Vagina (tissue), 2 donors: ENCODE measurements at regions of chr9 and their contacts with region 1.

Region 1: GRCh38 chr9:87662808-87663528 is 63.0 kb upstream of the CTSL start:
- DNase-seq: peak in 1 of 2 donors; percentile 74
- H3K4me3 ChIP-seq: no peak overlapping the region
- H3K27ac ChIP-seq: no peak overlapping the region
- H3K4me1 ChIP-seq: no peaks in the 10 kb centered on the region
- H3K27me3 ChIP-seq: no peaks in the 10 kb centered on the region
- CTCF ChIP-seq: peak; percentile 38 to 61 (median 43)
- POLR2A ChIP-seq: no peak

Region 2: GRCh38 chr9:87336914-87337333 is 326.0 kb before region 1 on chr9:
- intact Hi-C with region 1: loop called (anchors 2 kb)
- DNase-seq: no peak
- H3K4me3 ChIP-seq: peak overlapping the region in 1 of 2 donors; percentile 17
- H3K27ac ChIP-seq: no peak overlapping the region
- H3K4me1 ChIP-seq: no peaks in the 10 kb centered on the region
- H3K27me3 ChIP-seq: no peaks in the 10 kb centered on the region
- CTCF ChIP-seq: peak; percentile 47 to 73 (median 67)
- POLR2A ChIP-seq: no peak

Region 3: DNA sequence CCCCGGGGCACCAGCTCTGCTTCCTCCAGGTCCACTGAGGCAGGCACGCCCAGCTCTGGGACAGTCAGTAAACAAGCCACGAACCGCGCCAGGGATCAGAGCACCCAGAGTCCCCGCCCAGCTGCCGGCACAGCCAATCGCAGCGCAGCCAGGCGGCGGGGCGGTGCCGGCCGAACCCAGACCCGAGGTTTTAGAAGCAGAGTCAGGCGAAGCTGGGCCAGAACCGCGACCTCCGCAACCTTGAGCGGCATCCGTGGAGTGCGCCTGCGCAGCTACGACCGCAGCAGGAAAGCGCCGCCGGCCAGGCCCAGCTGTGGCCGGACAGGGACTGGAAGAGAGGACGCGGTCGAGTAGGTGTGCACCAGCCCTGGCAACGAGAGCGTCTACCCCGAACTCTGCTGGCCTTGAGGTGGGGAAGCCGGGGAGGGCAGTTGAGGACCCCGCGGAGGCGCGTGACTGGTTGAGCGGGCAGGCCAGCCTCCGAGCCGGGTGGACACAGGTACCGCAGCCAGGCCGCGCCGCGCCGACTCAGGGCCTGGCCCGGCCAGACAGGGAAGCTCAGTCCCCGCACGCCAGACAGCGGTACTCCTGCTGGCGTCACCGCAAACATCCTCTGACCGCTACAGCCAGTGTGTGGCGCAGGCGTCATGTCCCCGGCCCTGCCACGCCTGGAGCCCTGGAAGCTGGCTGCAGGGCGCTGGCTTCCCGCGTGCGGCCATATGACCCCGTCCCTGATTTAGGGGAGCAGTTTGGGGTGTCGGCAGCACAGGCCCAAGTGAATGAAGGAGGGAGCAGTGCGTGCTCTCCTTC is 63.1 kb after region 1 on chr9 and contains the start of gene CTSL:
- intact Hi-C with region 1: no loop called
- DNase-seq: peak in 1 of 2 donors; percentile 96
- H3K4me3 ChIP-seq: peak within 1 kb of the TSS; percentile 72 to 85
- H3K27ac ChIP-seq: peak within 1 kb of the TSS; percentile 87
- H3K4me1 ChIP-seq: peaks cover 39% of the 10 kb centered on the region
- H3K27me3 ChIP-seq: no peaks in the 10 kb centered on the region
- CTCF ChIP-seq: peak in 1 of 3 experiments; percentile 24
- POLR2A ChIP-seq: peak in 1 of 2 donors; percentile 63
- total RNA-seq, gene CTSL: 68.0 TPM

Region 4: GRCh38 chr9:88072851-88073365 is 409.9 kb after region 1 on chr9:
- intact Hi-C with region 1: no loop called
- DNase-seq: no peak
- H3K4me3 ChIP-seq: no peak overlapping the region
- H3K27ac ChIP-seq: no peak overlapping the region
- H3K4me1 ChIP-seq: peaks cover 16% of the 10 kb centered on the region
- H3K27me3 ChIP-seq: no peaks in the 10 kb centered on the region
- CTCF ChIP-seq: no peak
- POLR2A ChIP-seq: no peak